ENCODE measurements at regions of chr1 and their contacts with region 1.

Region 1: DNA sequence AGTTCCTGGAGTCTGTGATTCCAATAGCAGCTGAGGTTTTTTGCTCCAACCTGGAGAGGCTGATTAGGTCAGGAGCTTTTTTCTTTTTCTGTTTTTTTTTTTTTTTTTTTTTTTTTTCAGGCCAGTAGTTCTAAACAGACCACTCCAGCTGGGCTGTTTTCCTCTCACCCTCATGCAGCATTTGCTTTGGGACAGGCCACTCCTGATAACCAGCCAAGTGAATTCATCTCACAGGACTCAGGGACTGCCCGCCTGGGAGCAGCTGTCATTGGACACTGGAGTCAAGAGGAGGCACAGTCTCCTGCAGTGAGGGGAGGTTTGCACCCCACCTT is 22.9 kb downstream of the PLXNA2 start:
- DNase-seq: no peak
- H3K4me3 ChIP-seq: no peak overlapping the region
- H3K27ac ChIP-seq: peak overlapping the region; percentile 91
- H3K4me1 ChIP-seq: peaks cover 59% of the 10 kb centered on the region
- H3K27me3 ChIP-seq: no peaks in the 10 kb centered on the region
- CTCF ChIP-seq: no peak

Region 2: DNA sequence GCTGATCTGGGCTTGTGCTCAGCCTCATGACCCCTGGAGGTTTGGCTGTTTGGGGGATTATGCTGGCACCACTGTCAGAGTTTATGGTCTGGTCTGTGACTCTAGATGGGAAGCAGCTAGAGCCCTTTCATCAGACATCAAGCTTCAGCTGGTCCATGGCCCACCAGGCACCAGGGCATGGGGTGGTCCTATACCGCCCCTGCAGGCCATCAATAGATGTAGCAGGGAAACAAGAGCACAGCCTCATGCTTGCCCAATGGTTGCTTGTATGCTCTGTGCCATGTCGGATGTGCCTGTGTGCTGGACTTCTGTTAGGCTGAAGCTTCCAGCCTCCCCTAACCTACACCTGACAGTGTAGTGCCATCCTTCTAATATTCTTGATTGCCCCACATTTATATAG is 239.3 kb before region 1 on chr1:
- CTCF ChIA-PET with region 1: no interaction called
- POLR2A ChIA-PET with region 1: no interaction called
- intact Hi-C with region 1: no loop called
- DNase-seq: no peak
- H3K4me3 ChIP-seq: no peak overlapping the region
- H3K27ac ChIP-seq: no peak overlapping the region
- H3K4me1 ChIP-seq: no peaks in the 10 kb centered on the region
- H3K27me3 ChIP-seq: peaks cover 31% of the 10 kb centered on the region
- CTCF ChIP-seq: peak; percentile 52

Region 3: DNA sequence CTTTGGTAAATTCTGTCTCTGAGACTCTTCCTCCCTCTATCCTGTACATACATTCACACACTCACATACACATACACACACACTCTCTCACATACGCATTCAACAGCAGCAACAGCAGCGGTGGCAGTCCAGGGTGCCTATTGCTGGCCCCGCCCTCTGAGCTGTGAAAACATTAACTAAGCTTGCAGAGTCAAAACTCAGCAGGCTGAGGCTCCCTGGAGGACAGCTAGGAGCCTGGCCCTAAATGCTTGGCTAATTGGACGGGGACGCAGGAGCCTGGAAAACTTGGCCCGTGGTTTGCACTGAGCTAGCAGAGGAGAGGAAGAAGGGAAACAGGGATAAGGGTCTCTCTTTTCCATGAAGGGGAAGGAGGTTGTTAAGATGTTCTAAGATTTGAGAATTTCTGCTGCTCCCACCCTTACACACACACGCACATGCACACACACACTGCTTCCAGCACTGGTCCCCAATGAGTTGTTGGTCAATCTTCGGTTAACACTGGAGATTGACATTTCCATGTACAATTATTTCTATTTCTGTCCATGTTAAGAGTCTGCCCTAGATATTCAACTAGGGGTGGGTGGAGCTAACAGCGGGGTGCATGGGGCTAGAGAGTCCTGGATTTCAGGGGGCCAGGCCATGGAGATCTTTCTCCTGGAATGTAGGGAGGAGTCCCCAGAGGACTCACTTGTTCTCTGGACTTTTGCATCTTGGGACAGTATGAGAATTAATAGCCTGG is 71.3 kb before region 1 on chr1:
- CTCF ChIA-PET with region 1: no interaction called
- POLR2A ChIA-PET with region 1: interaction called, 20 read pairs
- intact Hi-C with region 1: no loop called
- DNase-seq: no peak
- H3K4me3 ChIP-seq: no peak overlapping the region
- H3K27ac ChIP-seq: no peak overlapping the region
- H3K4me1 ChIP-seq: peaks cover 16% of the 10 kb centered on the region
- H3K27me3 ChIP-seq: no peaks in the 10 kb centered on the region
- CTCF ChIP-seq: no peak

Region 4: DNA sequence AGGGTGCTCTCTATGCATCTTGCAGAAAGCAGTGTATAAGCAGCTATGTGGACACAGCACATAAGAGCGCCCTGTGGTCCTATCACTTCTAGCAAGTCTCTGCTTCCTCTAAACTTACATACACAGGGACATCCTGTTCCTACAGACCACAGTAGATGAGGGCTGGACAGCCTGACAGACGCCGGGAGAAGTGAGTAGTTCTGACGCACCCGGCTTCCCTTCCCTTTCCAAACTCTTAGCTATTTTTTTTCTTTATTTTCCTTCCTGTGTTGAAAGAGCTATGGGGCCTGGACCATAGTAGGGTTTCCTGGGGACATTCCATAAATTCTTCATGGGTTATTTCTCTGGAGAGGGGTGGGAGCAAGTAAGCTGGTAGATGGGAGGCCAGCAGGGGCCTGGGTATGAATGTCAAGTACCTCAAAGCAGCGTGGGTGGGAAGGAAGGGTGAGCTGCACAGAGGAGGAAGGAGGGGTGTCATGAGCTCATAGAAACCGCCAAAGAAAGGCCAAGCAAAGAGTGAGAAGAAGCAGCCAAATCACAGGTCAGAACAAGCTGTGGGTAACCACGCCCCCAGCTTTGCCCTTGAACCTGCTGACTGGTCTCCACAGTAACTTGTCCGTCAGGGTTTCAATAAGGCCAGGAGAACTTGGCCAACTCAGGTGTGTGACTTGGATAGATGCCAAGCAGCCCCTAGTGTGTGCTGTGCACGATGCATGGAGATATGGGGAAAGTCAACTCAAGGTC is 13.7 kb before region 1 on chr1:
- CTCF ChIA-PET with region 1: no interaction called
- POLR2A ChIA-PET with region 1: interaction called, 4 read pairs
- intact Hi-C with region 1: loop called (anchors 1 kb)
- DNase-seq: peak in 1 of 2 experiments; percentile 53
- H3K4me3 ChIP-seq: no peak overlapping the region
- H3K27ac ChIP-seq: peak overlapping the region; percentile 20; the same call in 1 of the 2 replicates
- H3K4me1 ChIP-seq: peaks cover 44% of the 10 kb centered on the region
- H3K27me3 ChIP-seq: no peaks in the 10 kb centered on the region
- CTCF ChIP-seq: no peak

Region 5: DNA sequence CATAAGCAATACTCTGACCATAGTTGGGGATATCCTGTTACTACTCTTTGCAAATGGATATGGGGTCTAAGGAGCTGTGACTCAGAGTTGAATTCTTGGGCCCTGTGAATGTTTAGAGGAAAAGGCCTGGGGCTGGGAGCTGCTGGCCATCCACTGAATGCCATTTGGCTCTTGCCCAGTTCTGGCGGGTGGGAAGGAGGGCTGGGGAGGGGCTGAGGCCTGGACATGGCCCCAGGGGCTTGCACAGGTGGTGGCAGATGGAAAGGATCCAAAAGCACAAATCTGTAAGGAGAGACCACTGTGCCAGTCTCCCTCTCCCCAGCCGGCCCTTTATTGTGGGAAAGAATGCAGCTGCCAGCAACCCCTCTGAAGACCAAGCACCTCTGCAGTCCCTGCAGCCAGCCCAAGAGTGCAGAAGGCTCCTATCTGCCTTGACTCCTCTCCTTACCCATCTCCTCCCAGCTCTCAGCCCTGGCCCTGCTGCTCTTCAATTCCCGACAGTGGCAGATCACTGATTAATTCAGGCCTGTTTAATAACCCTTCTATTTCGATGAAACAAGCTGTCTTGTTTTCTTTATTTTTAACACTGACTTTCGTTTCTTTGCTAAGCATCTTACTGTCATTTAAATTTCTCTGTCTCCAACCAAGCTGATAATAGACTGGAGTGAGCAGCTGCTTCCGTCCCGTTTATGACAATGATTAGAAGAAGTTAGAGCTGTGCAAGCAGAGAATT is 10.8 kb after region 1 on chr1:
- CTCF ChIA-PET with region 1: no interaction called
- POLR2A ChIA-PET with region 1: interaction called, 30 read pairs
- intact Hi-C with region 1: loop called (anchors 1 kb)
- DNase-seq: peak; percentile 88 to 89
- H3K4me3 ChIP-seq: no peak overlapping the region
- H3K27ac ChIP-seq: peak overlapping the region; percentile 27
- H3K4me1 ChIP-seq: peaks cover 64% of the 10 kb centered on the region
- H3K27me3 ChIP-seq: no peaks in the 10 kb centered on the region
- CTCF ChIP-seq: no peak

Region 6: DNA sequence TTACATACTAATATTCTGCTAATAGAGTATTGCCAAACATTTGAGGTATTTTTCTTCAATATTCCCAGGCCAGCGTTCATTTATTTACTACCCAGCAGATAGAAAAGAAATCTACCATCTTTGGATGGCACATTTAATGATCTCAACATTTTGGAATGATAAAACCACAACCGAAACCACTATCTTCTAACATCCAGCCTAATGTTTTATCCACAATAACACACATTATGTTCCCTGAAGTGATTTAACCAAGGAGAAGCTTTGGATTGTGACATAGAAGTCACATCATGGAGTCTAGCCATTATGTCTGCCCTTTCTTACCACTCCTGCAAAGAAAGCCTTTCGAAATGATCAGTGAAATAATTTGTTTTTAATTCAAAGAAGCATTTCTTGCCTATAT is 520.0 kb after region 1 on chr1:
- CTCF ChIA-PET with region 1: no interaction called
- POLR2A ChIA-PET with region 1: interaction called, 19 read pairs
- intact Hi-C with region 1: no loop called
- DNase-seq: no peak
- H3K4me3 ChIP-seq: no peak overlapping the region
- H3K27ac ChIP-seq: no peak overlapping the region
- H3K4me1 ChIP-seq: no peaks in the 10 kb centered on the region
- H3K27me3 ChIP-seq: peaks cover 12% of the 10 kb centered on the region; the same call in 1 of the 2 replicates
- CTCF ChIP-seq: no peak

Region 7: GRCh38 chr1:209076688-209077087 is 855.4 kb after region 1 on chr1:
- CTCF ChIA-PET with region 1: no interaction called
- POLR2A ChIA-PET with region 1: no interaction called
- intact Hi-C with region 1: no loop called
- DNase-seq: no peak
- H3K4me3 ChIP-seq: no peak overlapping the region
- H3K27ac ChIP-seq: no peak overlapping the region
- H3K4me1 ChIP-seq: peaks cover 6% of the 10 kb centered on the region
- H3K27me3 ChIP-seq: no peaks in the 10 kb centered on the region
- CTCF ChIP-seq: peak; percentile 50